CD4-positive, alpha-beta memory T cell (primary cell): ENCODE measurements at regions of chr3 and their contacts with region 1.

Region 1: DNA sequence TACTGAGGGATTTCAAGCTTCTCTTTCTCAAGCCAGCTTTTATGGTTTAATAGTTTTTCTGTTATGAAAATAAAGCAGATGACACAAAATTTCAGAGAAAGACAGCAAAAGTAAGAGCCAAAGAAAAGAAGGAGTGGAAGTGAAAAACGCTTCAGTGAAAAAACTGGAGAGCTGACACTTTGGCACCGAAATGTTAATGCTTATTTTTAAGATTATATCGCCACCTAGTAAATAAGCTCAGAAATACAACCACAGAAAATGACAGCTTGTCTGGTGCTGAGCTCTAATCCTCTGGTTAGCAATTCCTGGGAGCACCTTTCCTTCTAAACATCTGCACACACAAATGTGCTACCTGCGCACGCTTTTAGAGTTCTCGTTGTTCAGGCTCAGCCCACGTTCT is 101.6 kb downstream of the ZPLD1 start:
- DNase-seq: peak in 4 of 5 donors; percentile 15 to 22 (median 18)
- H3K4me3 ChIP-seq: no peak overlapping the region
- H3K4me3 Mint-ChIP-seq: no peak overlapping the region
- H3K27ac ChIP-seq: no peak overlapping the region
- H3K27ac Mint-ChIP-seq: no peak overlapping the region
- H3K4me1 ChIP-seq: peaks cover 6% of the 10 kb centered on the region
- H3K4me1 Mint-ChIP-seq: peaks cover 0 to 8% (median 7%) of the 10 kb centered on the region in 4 donors
- H3K27me3 ChIP-seq: no peaks in the 10 kb centered on the region
- H3K27me3 Mint-ChIP-seq: peaks cover 3 to 6% of the 10 kb centered on the region in 2 donors

Region 2: DNA sequence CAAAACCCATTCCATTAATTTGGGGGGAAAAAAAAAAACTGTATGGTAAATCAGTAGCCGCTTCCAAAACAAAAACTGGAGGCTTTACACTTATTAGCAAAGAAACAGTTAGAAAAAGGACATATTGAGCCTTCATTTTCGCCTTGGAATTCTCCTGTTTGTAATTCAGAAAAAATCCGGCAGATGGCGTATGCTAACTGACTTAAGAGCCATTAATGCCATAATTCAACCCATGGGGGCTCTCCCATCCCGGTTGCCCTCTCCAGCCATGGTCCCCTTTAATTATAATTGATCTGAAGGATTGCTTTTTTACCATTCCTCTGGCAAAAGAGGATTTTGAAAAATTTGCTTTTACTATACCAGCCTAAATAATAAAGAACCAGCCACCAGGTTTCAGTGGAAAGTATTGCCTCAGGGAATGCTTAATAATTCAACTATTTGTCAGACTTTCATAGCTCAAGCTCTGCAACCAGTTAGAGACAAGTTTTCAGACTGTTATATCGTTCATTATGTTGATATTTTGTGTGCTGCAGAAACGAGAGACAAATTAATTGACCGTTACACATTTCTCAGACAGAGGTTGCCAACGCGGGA is 840.6 kb before region 1 on chr3:
- CTCF ChIA-PET with region 1: no interaction called
- POLR2A ChIA-PET with region 1: no interaction called
- intact Hi-C with region 1: loop called (anchors 2 kb)
- DNase-seq: peak; percentile 51 to 67 (median 58)
- H3K4me3 ChIP-seq: no peak overlapping the region
- H3K4me3 Mint-ChIP-seq: no peak overlapping the region
- H3K27ac ChIP-seq: no peak overlapping the region
- H3K27ac Mint-ChIP-seq: peak overlapping the region in 2 of 7 donors; percentile 74 to 77
- H3K4me1 ChIP-seq: peaks cover 3% of the 10 kb centered on the region
- H3K4me1 Mint-ChIP-seq: peaks cover 0 to 2% (median 1%) of the 10 kb centered on the region in 4 donors
- H3K27me3 ChIP-seq: no peaks in the 10 kb centered on the region
- H3K27me3 Mint-ChIP-seq: no peaks in the 10 kb centered on the region

Region 3: DNA sequence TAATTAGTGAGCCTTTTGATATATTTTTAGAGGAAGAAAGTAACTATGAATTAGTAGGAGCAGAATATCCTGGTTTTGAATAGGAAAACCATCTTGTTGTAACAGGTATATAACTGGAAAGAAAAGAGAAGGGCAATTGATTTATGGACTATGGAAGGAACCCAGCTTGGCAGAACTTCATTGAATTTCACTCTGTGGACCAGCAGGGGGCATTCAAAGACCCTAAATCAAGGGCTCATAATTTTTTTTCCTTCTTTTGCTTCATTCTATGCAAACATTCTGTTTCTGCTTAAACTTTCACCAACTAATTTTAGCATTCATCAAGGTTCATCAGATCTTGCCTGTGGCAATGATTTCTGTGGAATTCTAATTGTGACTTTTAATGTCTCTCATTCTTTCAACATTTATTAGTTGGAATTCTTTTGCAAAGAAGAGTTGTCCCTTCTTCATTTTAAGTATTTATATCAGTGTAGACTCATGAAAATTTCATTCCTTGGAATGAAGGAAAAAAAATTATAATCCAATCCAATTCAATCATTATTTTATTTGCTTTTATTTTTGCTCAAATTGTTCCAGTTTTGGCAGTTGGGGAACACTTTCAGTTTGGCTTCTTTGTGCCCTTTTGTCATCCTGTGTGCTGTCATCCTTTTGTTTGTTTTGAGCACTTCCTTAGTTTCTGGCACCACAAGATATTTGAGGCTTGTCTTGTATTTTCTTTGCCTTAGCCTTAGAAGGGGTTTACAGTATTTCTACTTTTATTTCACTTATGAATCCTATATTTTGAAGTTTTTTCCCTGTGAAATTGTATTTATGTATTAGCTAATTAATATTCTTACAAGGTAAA is 727.1 kb before region 1 on chr3:
- CTCF ChIA-PET with region 1: interaction called, 15 read pairs
- POLR2A ChIA-PET with region 1: no interaction called
- intact Hi-C with region 1: loop called (anchors 1 kb)
- DNase-seq: peak; percentile 49 to 60 (median 55)
- H3K4me3 ChIP-seq: no peak overlapping the region
- H3K4me3 Mint-ChIP-seq: peak overlapping the region in 6 of 8 donors; percentile 22 to 43 (median 34)
- H3K27ac ChIP-seq: peak overlapping the region; percentile 29
- H3K27ac Mint-ChIP-seq: peak overlapping the region; percentile 43 to 90 (median 83)
- H3K4me1 ChIP-seq: peaks cover 28% of the 10 kb centered on the region
- H3K4me1 Mint-ChIP-seq: peaks cover 25 to 47% (median 30%) of the 10 kb centered on the region in 4 donors
- H3K27me3 ChIP-seq: no peaks in the 10 kb centered on the region
- H3K27me3 Mint-ChIP-seq: no peaks in the 10 kb centered on the region

Region 4: GRCh38 chr3:102374863-102375634 is 161.4 kb before region 1 on chr3:
- CTCF ChIA-PET with region 1: no interaction called
- POLR2A ChIA-PET with region 1: no interaction called
- intact Hi-C with region 1: no loop called
- DNase-seq: no peak
- H3K4me3 ChIP-seq: no peak overlapping the region
- H3K4me3 Mint-ChIP-seq: no peak overlapping the region
- H3K27ac ChIP-seq: no peak overlapping the region
- H3K27ac Mint-ChIP-seq: no peak overlapping the region
- H3K4me1 ChIP-seq: no peaks in the 10 kb centered on the region
- H3K4me1 Mint-ChIP-seq: peaks cover 0 to 6% (median 2%) of the 10 kb centered on the region in 4 donors
- H3K27me3 ChIP-seq: no peaks in the 10 kb centered on the region
- H3K27me3 Mint-ChIP-seq: peaks cover 1 to 3% of the 10 kb centered on the region in 2 donors

Region 5: DNA sequence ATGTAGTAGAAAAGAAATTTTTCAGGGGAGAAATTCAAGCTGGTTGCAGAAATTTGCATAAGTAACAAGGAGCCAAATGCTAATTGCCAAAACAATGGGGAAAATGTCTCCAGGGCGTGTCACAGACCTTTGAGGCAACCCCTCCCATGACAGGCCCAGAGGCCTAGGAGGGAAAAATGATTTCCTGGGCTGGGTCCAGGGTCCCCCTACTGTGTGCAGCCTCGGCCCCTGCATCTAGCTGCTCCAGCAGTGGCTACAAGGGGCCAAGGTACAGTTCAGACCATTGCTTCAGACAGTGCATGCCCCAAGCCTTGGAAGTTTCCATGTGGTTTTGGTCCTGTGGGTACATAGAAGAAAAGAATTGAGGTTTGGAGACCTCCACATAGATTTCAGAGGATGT is 30.9 kb before region 1 on chr3:
- CTCF ChIA-PET with region 1: no interaction called
- POLR2A ChIA-PET with region 1: no interaction called
- intact Hi-C with region 1: no loop called
- DNase-seq: no peak
- H3K4me3 ChIP-seq: no peak overlapping the region
- H3K4me3 Mint-ChIP-seq: no peak overlapping the region
- H3K27ac ChIP-seq: no peak overlapping the region
- H3K27ac Mint-ChIP-seq: no peak overlapping the region
- H3K4me1 ChIP-seq: no peaks in the 10 kb centered on the region
- H3K4me1 Mint-ChIP-seq: no peaks in the 10 kb centered on the region
- H3K27me3 ChIP-seq: no peaks in the 10 kb centered on the region
- H3K27me3 Mint-ChIP-seq: peaks cover 2 to 5% of the 10 kb centered on the region in 2 donors